ENCODE measurements at regions of chr6 and their contacts with region 1.

Region 1: DNA sequence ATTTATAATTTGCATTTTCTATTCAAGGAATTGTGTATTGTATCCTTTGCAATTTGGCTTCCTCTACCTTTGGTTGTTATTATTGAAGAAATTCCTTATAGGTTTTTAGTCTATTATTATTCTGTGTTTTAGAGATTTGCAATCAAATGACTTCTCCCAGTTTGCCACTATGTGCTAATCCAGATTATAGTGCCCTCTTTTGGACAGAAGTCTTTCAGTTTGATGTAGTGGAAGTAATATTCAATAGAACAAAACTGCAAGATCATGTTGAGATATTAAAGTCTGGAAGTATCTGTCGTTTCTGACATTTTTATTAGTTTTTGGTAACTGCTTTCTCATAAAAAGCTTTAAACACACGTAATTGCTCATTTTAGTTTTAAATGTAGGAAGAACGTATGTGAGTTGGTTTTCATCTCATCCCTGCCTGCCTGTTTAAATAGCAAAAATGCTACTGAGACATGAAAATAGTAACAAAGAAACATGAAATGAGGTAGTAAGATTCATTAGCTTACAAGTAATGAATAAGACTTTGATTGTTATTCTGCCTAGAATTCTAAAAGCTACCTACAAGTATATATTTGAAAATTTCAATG is 72.8 kb downstream of the RTN4IP1 start:
- DNase-seq: no peak

Region 2: DNA sequence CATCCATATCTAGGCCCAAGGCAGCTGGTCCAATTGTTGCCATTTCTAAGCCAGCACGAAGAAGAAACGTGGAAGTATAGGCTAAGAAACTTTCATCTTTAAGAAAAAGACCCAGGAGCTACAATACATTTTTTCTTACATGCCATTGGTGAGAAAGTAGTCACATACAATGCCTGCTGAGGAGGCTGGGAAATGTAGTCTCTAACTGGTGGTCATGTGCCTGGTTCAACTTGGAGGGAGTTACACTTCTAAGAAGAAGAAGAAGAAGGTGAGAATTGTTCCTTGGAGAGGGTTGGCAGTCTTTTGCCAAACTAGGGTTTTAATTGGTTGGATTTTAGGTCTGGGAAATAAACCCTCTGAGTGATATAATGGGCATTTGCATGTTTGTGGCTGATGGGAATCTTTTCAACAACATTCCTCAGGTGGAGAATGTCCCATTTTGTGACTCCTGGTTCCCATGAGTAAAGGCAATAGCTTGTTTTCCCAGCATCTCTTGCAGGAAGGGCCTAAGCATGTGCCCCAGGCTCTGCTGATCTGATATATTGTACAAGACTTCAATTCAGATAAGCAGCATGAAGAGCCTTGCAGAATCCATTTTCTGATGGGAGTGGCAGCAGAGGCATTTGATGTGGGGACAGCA is 1106.6 kb before region 1 on chr6:
- intact Hi-C with region 1: loop called in 1 of 2 experiments (anchors 2 kb)
- DNase-seq: no peak

Region 3: GRCh38 chr6:106339334-106340029 is 217.0 kb before region 1 on chr6:
- intact Hi-C with region 1: loop called in 1 of 2 experiments (anchors 10 kb)
- DNase-seq: no peak

Region 4: DNA sequence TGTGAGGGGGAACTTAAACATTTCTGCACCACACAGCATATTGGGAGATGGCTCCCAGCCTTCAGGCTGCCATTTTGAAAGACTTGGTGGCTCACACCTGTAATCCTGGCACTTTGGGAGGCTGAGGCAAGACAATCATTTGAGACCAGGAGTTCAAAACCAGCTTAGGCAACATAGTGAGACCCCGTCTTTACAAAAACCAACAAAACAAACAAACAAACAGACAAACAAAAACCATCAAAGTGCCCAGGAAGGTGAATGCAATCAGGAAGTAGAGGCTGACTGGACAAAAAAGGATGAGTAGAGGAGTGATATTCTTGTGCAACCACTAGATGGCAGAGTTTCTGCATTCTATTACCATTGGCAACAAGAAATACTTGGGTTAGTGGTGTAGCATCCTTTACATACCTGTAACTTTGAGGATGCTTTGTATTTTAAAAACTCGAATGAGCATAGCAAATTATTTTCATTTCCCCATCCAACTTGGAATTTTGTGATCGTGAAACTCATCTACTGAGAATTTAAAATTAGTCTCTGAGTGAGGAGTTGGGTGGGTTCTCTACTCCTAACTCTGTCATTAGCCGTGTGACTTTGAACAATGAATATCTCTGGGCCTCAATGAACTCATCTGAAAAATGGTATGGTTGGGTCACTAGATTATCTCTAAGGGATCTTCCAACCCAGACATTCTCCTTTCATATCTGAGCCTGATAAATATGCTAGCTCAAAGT is 111.5 kb before region 1 on chr6:
- intact Hi-C with region 1: loop called in 1 of 2 experiments (anchors 10 kb)
- DNase-seq: no peak

Region 5: DNA sequence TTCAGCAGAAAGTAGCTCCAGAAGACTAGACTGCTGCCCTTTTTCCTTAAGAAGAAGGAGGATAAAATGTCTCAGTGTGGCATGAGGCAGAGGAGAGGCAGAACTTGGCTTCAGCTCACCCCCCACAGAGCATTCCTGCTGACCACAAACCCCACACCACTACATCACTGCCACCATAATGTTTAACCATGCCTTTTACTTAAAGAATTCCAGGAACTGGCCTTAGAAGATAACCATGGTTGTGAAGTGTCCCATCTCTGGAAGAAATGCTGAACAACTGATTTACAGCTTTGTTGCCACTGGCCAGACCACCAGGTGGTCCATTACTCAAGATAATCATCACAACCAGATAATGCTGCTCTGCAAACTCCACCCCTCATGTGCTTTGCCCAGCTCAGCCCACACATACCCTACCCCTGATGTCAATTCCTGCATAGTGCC is 264.0 kb after region 1 on chr6:
- intact Hi-C with region 1: no loop called
- DNase-seq: no peak